ENCODE measurements at regions of chr3 and their contacts with region 1.

Region 1: GRCh38 chr3:155870133-155870944 is at the start of gene GMPS:
- DNase-seq: peak; percentile 94
- H3K4me3 Mint-ChIP-seq: peak within 1 kb of the TSS; percentile 90
- H3K27ac Mint-ChIP-seq: peak within 1 kb of the TSS; percentile 90
- H3K4me1 Mint-ChIP-seq: peaks cover 22% of the 10 kb centered on the region
- H3K27me3 Mint-ChIP-seq: no peaks in the 10 kb centered on the region
- total RNA-seq, gene GMPS: 114 to 123 TPM

Region 2: DNA sequence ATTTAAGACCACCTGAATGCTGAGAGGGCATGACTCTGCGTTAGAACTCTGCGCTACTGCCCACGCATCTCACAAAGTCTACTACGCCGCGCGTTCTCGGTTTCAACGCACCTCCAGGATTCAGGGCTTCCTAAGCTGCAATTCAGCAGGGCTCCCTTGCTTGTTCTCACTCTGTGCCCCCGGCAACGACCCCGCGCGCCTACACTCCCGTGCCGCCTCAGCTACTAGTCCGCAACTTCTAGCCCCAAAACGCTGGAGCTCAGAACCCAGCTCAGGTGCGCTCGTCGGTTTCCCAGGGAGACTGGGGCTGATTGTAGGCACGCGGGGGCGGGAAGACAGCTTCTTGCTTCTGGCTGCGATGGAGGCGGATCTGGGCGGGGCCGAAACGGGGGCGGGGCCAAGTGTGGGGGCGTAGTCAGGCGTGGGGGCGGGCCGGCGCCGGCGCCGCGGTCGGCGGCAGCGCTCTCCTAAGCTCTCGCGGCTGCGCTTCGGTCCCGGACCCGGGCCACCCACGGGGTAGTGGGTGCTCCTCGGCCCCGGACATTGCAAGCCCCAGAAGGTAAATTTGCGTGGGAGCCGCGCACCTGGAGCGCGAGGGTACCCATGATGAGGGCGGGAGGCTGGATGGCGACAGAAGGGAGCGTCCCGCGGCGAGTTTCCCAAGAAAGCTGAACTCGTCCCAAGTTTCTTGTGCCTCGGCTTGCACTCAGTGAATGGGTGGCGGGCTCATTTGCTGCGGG is 1749.2 kb before region 1 on chr3 and contains the start of gene ARHGEF26:
- CTCF ChIA-PET with region 1: no interaction called
- intact Hi-C with region 1: loop called (anchors 10 kb)
- DNase-seq: peak; percentile 89
- H3K4me3 Mint-ChIP-seq: peak within 1 kb of the TSS; percentile 79
- H3K27ac Mint-ChIP-seq: no peak within 1 kb of the TSS
- H3K4me1 Mint-ChIP-seq: peaks cover 12% of the 10 kb centered on the region
- H3K27me3 Mint-ChIP-seq: peaks cover 58% of the 10 kb centered on the region
- total RNA-seq, gene ARHGEF26: 0.25 to 0.45 TPM

Region 3: DNA sequence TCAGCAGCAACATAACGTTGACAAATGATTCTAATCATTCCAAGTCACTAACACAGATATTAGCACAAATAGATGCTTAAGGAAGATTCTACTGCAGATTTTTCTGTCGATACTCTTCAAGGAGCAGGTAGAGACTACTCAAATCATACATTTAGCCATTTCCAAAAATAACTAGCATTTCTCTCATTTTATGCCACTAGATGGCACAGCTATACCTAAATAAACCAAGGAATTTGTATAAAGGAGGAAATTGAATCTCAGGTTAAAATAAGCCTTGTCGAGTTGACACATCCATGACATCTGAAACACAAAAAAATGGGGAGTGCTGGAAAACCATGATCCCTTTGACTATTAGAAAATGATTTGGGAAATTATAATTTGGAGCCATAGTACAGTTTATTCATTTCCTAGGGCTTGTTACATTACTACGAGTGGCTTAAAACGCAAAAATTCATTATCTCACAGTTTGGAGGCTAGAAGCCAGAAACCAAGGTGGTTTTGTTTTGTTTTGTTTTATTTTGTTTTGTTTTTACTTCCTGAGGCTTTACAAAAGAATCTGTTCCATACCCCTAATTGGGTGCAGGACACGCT is 517.3 kb before region 1 on chr3:
- CTCF ChIA-PET with region 1: no interaction called
- intact Hi-C with region 1: loop called (anchors 5 kb)
- DNase-seq: no peak
- H3K4me3 Mint-ChIP-seq: no peak overlapping the region
- H3K27ac Mint-ChIP-seq: no peak overlapping the region
- H3K4me1 Mint-ChIP-seq: no peaks in the 10 kb centered on the region
- H3K27me3 Mint-ChIP-seq: peaks cover 9% of the 10 kb centered on the region

Region 4: GRCh38 chr3:155753036-155753639 is 117.2 kb before region 1 on chr3:
- CTCF ChIA-PET with region 1: no interaction called
- intact Hi-C with region 1: loop called (anchors 1 kb)
- DNase-seq: peak; percentile 22
- H3K4me3 Mint-ChIP-seq: no peak overlapping the region
- H3K27ac Mint-ChIP-seq: no peak overlapping the region
- H3K4me1 Mint-ChIP-seq: no peaks in the 10 kb centered on the region
- H3K27me3 Mint-ChIP-seq: no peaks in the 10 kb centered on the region

Region 5: GRCh38 chr3:155859859-155860258 is 10.5 kb before region 1 on chr3:
- CTCF ChIA-PET with region 1: no interaction called
- intact Hi-C with region 1: loop called (anchors 1 kb)
- DNase-seq: no peak
- H3K4me3 Mint-ChIP-seq: no peak overlapping the region
- H3K27ac Mint-ChIP-seq: no peak overlapping the region
- H3K4me1 Mint-ChIP-seq: peaks cover 17% of the 10 kb centered on the region
- H3K27me3 Mint-ChIP-seq: no peaks in the 10 kb centered on the region